WTC11 (cell line): ENCODE measurements at regions of chr19 and their contacts with region 1.

Region 1: DNA sequence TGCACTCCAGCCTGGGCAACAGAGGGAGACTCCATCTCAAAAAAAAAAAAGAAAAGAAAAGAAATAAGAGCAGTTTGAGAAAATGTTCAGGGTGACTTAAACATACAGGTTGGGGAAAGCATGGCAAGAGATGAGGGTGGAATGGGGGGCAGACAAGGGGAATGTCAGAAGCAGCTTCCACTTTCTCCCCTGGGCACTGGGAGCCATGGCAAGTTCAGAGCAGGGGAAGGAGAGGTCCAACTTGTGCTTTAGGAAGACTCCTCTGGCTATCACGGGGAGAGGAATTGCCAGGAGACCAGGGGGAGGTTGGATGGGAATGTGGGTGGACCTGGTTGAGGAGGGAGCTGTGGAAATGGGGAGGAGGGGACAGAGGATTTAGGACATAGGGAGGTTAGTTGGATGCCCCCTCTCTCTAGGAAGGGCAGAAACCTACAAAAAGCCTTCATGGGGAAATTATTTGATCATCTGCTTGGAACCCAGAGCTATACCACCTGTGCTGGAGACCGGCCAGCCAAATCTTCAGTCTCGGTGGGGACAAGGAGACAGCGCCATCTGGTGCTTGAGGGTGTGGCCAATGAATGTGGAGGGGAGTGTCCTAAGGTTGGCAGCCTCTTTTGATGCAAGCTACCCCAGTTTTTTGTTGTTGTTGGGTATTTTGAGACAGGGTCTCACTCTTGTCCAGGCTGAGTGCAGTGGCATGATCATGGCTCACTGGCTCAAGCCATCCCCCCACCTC is 7.3 kb upstream of the STRN4 start:
- DNase-seq: peak; percentile 77
- ATAC-seq: peak; percentile 80
- H3K4me3 Mint-ChIP-seq: no peak overlapping the region
- H3K27ac Mint-ChIP-seq: no peak overlapping the region
- H3K4me1 Mint-ChIP-seq: 0 out of 2 replicates have a peak, but pooled peaks cover 2% of the 10 kb centered on the region
- H3K27me3 Mint-ChIP-seq: no peaks in the 10 kb centered on the region
- CTCF ChIP-seq: 0 out of 2 replicates have a peak, but pooled peaks have one; percentile 50

Region 2: GRCh38 chr19:46648060-46648960 is 105.3 kb before region 1 on chr19:
- CTCF ChIA-PET with region 1: no interaction called
- POLR2A ChIA-PET with region 1: no interaction called
- DNase-seq: no peak
- ATAC-seq: peak; percentile 37
- H3K4me3 Mint-ChIP-seq: peak overlapping the region; percentile 62
- H3K27ac Mint-ChIP-seq: no peak overlapping the region
- H3K4me1 Mint-ChIP-seq: peaks cover 6% of the 10 kb centered on the region
- H3K27me3 Mint-ChIP-seq: peaks cover 84% of the 10 kb centered on the region
- CTCF ChIP-seq: no peak

Region 3: DNA sequence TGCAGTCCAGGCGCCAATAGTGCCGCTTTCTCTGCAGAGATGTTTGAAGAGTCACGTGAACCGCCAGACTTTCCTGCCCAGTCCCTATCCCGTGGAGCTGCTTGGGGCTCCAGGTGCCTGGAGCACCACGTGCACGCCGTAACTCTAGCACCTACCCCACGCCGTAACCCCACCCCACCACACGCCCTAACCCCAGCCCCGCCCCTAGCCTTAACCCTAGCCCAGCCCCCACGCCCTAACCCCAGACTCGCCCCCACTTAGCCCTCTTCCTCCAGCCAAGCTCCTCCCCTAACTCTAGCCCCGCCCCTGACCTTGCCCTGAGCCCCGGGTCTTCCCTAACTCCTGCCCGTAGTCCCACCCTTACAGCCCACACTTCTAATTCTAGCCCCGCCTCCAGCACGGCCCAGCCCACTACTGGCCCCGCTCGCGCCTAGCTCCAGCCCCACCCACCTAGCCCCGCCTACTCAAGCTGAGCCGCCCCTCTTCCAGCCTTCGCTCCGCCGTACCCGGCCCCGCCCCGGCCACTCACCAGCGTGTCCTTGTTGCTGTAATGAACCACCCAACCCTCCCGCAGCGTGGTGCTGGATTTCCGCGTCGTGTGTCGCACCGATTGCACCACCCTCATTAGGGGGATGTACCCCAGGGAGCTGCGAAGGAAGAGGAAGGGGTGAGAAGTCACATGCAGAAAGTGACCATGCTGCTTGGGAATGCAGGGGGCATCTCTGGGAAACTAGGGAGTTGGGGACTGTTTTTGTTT is 56.2 kb before region 1 on chr19:
- CTCF ChIA-PET with region 1: interaction called, 22 read pairs
- POLR2A ChIA-PET with region 1: no interaction called
- DNase-seq: peak; percentile 100
- ATAC-seq: peak; percentile 99
- H3K4me3 Mint-ChIP-seq: peak overlapping the region; percentile 55
- H3K27ac Mint-ChIP-seq: peak overlapping the region; percentile 97
- H3K4me1 Mint-ChIP-seq: peaks cover 11% of the 10 kb centered on the region
- H3K27me3 Mint-ChIP-seq: no peaks in the 10 kb centered on the region
- CTCF ChIP-seq: no peak

Region 4: GRCh38 chr19:46717034-46717723 is 36.4 kb before region 1 on chr19 and contains the start of gene PRKD2:
- CTCF ChIA-PET with region 1: interaction called, 12 read pairs
- POLR2A ChIA-PET with region 1: no interaction called
- DNase-seq: peak; percentile 97
- ATAC-seq: peak; percentile 62
- H3K4me3 Mint-ChIP-seq: peak within 1 kb of the TSS; percentile 95
- H3K27ac Mint-ChIP-seq: peak within 1 kb of the TSS; percentile 94
- H3K4me1 Mint-ChIP-seq: peaks cover 18% of the 10 kb centered on the region
- H3K27me3 Mint-ChIP-seq: no peaks in the 10 kb centered on the region
- CTCF ChIP-seq: no peak
- total RNA-seq, gene PRKD2: 78.5 to 100 TPM (median 81.5 TPM) in 3 replicates

Region 5: GRCh38 chr19:46741447-46741846 is 12.1 kb before region 1 on chr19:
- CTCF ChIA-PET with region 1: interaction called, 21 read pairs
- POLR2A ChIA-PET with region 1: no interaction called
- DNase-seq: no peak
- ATAC-seq: peak; percentile 8; the same call in 1 of the 2 replicates
- H3K4me3 Mint-ChIP-seq: no peak overlapping the region
- H3K27ac Mint-ChIP-seq: peak overlapping the region; percentile 43; the same call in 1 of the 2 replicates
- H3K4me1 Mint-ChIP-seq: peaks cover 39% of the 10 kb centered on the region
- H3K27me3 Mint-ChIP-seq: no peaks in the 10 kb centered on the region
- CTCF ChIP-seq: no peak

Region 6: DNA sequence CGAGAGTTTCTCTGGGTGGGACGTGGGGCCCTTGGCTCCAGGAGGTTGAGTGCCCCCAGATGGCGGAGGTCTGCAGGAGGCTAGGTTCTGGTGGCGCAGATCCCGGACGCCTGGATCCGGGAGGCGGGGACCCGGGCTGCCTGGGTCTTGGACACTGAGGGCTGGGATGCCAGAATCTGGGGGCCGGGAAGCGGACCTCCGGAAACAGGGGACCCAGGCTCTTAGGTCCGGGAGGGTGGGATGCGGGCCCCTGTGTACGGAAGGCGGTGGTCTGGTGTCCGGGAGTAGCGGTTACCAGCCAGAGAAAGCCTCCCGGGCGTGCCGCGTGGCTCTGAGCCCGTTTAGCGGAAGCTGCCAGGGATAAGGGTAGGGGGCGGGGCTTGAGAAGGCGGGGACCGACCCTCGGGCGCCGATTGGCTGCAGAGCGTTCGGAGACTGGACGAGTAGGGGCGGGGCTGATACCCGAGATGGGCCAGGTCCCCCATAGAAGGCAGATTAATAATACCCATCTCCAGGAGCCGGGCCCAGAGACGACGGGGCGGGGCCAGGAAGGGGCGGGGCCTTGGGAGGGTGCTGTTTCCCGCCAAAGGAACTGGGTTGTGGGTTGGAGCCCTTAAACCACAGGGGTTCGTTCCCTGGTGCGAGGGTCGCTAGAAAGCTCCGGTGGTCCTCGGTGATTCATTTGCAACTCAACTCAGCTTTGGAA is 34.8 kb after region 1 on chr19 and contains the start of gene SLC1A5:
- CTCF ChIA-PET with region 1: interaction called, 10 read pairs
- POLR2A ChIA-PET with region 1: no interaction called
- DNase-seq: peak; percentile 99
- ATAC-seq: peak; percentile 86
- H3K4me3 Mint-ChIP-seq: peak within 1 kb of the TSS; percentile 95
- H3K27ac Mint-ChIP-seq: no peak within 1 kb of the TSS
- H3K4me1 Mint-ChIP-seq: peaks cover 36% of the 10 kb centered on the region
- H3K27me3 Mint-ChIP-seq: peaks cover 16% of the 10 kb centered on the region
- CTCF ChIP-seq: no peak
- total RNA-seq, gene SLC1A5: 173 to 239 TPM (median 187 TPM) in 3 replicates

Region 7: DNA sequence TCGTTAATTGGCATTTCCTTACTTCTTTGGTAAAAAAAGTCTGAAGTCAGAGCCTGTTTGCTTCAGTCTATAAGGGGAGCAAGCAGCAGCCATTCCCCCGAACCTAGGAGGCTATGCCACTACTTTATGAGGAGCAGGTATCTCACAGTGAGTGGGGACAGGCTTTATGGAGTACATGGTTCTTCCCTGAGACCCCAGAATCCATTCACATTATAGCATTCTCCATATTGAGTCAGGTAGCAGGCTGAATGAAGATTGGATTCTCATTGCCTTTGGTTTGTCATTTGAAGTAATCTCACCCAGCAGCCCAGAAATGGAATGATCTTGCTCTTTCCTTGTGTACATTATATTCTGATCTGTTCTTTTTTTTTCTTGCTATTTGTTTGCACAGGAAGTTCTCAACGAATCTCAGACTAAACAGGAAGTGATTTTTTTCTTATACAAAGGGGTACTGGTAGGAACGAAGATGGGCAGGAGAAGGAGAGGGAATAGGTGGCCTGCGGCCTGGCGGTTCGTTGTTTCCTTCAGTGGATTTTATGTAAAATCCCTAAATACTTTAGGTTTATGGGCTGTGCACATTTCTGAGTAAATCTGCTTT is 181.6 kb after region 1 on chr19:
- CTCF ChIA-PET with region 1: no interaction called
- POLR2A ChIA-PET with region 1: no interaction called
- DNase-seq: no peak
- ATAC-seq: no peak
- H3K4me3 Mint-ChIP-seq: no peak overlapping the region
- H3K27ac Mint-ChIP-seq: peak overlapping the region; percentile 58
- H3K4me1 Mint-ChIP-seq: peaks cover 8% of the 10 kb centered on the region
- H3K27me3 Mint-ChIP-seq: no peaks in the 10 kb centered on the region
- CTCF ChIP-seq: no peak